ENCODE measurements at regions of chr20 and their contacts with region 1.

Region 1: DNA sequence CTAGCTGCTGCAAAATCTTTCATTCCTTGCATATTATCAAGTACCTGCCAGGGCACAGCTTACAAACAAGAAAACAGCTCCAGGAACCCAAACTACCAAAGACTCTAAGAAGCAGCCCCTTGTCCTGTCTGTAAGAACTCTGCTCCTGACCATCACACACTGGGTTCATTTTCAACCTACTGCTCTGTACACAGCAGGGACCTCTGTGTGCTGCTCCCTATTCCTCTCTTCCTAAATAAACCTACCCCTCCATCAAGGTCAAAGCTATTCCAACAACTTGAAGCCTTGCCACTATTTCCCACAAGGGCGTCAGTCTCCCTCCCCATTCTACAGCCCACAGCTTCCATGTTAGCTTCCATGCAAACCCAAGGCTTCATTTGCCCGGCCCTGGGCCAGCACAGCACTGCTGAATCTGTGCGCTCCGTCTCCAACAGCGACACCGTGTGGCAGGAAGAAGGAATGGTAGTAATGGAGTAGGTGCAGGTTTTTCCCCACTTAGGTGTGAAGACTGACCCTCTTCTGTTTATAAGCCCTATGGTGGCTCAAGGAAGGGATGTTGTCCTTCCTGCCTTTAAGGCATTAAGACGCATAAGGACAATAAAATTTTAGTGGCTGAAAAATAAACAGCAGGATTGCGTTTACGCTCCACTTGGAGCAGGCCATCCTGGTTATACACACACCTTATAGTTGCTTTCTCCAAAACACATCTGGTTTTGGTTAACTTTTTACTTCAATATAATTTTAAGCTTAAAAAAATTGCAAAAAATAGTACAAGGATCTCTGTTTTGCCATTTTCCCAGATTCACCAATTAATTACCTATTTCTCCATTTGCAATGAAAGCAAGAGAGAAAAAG is 115.2 kb upstream of the NXT1 start:
- DNase-seq: peak; percentile 54
- ATAC-seq: peak; percentile 71
- H3K4me3 ChIP-seq: no peak overlapping the region
- H3K27ac ChIP-seq: no peak overlapping the region
- H3K4me1 ChIP-seq: peaks cover 5% of the 10 kb centered on the region; the same call in 1 of the 2 replicates
- H3K27me3 ChIP-seq: peaks cover 4% of the 10 kb centered on the region; the same call in 1 of the 2 replicates
- CTCF ChIP-seq: peak; percentile 67
- POLR2A ChIP-seq: no peak
- RAD21 ChIP-seq: peak; percentile 79

Region 2: GRCh38 chr20:23061734-23062561 is 173.5 kb before region 1 on chr20:
- CTCF ChIA-PET with region 1: no interaction called
- POLR2A ChIA-PET with region 1: no interaction called
- dilution Hi-C with region 1: no loop called
- in situ Hi-C with region 1: no loop called
- intact Hi-C with region 1: loop called (anchors 5 kb)
- DNase-seq: peak; percentile 57
- ATAC-seq: peak; percentile 85
- H3K4me3 ChIP-seq: no peak overlapping the region
- H3K27ac ChIP-seq: no peak overlapping the region
- H3K4me1 ChIP-seq: peaks cover 10% of the 10 kb centered on the region; the same call in 1 of the 2 replicates
- H3K27me3 ChIP-seq: peaks cover 28% of the 10 kb centered on the region
- CTCF ChIP-seq: peak; percentile 43
- POLR2A ChIP-seq: no peak
- RAD21 ChIP-seq: peak; percentile 56

Region 3: GRCh38 chr20:23296841-23297701 is 61.7 kb after region 1 on chr20:
- CTCF ChIA-PET with region 1: no interaction called
- POLR2A ChIA-PET with region 1: no interaction called
- dilution Hi-C with region 1: no loop called
- in situ Hi-C with region 1: no loop called
- intact Hi-C with region 1: no loop called
- DNase-seq: no peak
- ATAC-seq: no peak
- H3K4me3 ChIP-seq: no peak overlapping the region
- H3K27ac ChIP-seq: no peak overlapping the region
- H3K4me1 ChIP-seq: no peaks in the 10 kb centered on the region
- H3K27me3 ChIP-seq: peaks cover 12% of the 10 kb centered on the region
- CTCF ChIP-seq: no peak
- POLR2A ChIP-seq: no peak
- RAD21 ChIP-seq: no peak